HCT116 (cell line): ENCODE measurements at regions of chr21 and their contacts with region 1.

Region 1: DNA sequence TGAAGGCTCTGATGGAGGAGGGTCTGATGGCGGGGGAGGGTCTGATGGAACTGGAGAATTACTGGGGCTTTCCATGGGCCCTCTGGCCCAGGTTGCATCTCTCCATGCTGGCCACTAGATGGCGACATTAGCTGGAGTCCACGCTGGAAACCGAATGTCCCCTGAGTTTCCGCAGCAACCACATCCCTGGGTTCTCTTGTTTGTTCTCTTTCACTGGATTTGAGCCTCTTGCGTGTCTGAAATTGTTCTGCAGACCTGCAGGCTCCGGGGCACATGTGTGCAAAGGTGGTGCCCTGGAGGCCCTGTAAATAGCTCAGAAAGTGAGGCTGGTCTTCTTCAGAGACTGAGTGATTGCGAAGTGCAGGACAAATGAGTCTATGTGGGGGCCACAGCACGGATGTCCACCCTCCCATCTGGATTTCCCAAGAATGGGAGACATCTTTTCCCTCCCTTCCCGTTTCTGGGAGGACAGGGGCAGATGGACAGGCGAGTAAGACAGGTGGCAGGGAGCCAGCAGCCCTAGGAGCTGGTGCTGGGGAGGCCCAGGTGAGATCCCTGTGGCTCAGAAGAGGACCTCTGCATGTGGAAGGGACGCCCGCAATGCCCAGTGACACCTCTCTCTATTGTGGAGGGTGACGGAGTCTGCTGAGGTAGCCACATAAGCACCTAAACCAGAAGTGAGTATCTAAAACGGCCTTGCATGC is 73.2 kb upstream of the ABCG1 start:
- DNase-seq: peak; percentile 21
- ATAC-seq: peak; percentile 88
- H3K4me3 ChIP-seq: no peak overlapping the region
- H3K27ac ChIP-seq: no peak overlapping the region
- H3K4me1 ChIP-seq: 0 out of 4 replicates have a peak, but pooled peaks cover 2 to 3% of the 10 kb centered on the region in 2 experiments
- H3K27me3 ChIP-seq: no peaks in the 10 kb centered on the region
- CTCF ChIP-seq: peak; percentile 72 to 92 (median 87)
- POLR2A ChIP-seq: no peak
- RAD21 ChIP-seq: peak; percentile 85

Region 2: GRCh38 chr21:42337830-42338728 is 192.4 kb after region 1 on chr21:
- CTCF ChIA-PET with region 1: interaction called, 6 read pairs
- POLR2A ChIA-PET with region 1: no interaction called
- RAD21 ChIA-PET with region 1: no interaction called
- intact Hi-C with region 1: loop called (anchors 1 kb)
- DNase-seq: no peak
- ATAC-seq: peak; percentile 87
- H3K4me3 ChIP-seq: no peak overlapping the region
- H3K27ac ChIP-seq: no peak overlapping the region
- H3K4me1 ChIP-seq: peaks cover 0 to 10% of the 10 kb centered on the region in 2 experiments; a peak in 3 of 4 replicates
- H3K27me3 ChIP-seq: no peaks in the 10 kb centered on the region
- CTCF ChIP-seq: peak; percentile 34 to 77 (median 73); a peak in 5 of 6 replicates
- POLR2A ChIP-seq: no peak
- RAD21 ChIP-seq: peak; percentile 31; the same call in 1 of the 2 replicates